ENCODE measurements at regions of chr10 and their contacts with region 1.

Region 1: DNA sequence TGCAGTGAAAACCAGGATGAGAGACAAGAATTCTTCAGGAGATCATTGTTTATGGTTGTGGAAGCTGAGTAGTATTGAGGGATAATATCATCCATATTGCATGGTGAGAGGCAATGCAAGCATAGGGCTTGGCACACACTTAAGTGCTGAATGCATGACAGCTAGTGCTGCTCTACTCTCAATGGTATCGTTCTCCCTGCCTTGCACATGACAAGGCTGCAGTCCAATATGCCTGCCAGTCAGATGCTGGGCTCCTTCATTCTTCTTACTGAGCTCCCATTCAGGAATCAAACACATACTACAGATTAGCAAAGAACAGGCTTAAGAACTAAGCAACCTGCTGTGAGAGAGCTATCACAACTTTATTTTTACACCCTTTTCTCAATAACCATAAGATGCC is 72.2 kb downstream of the SORCS1 start:
- DNase-seq: no peak
- H3K4me3 ChIP-seq: no peak overlapping the region
- H3K27ac ChIP-seq: no peak overlapping the region
- H3K4me1 ChIP-seq: peaks cover 8% of the 10 kb centered on the region
- H3K27me3 ChIP-seq: no peaks in the 10 kb centered on the region
- CTCF ChIP-seq: no peak

Region 2: GRCh38 chr10:106436123-106436740 is 656.1 kb before region 1 on chr10:
- CTCF ChIA-PET with region 1: no interaction called
- POLR2A ChIA-PET with region 1: interaction called, 10 read pairs
- intact Hi-C with region 1: no loop called
- DNase-seq: no peak
- H3K4me3 ChIP-seq: no peak overlapping the region
- H3K27ac ChIP-seq: no peak overlapping the region
- H3K4me1 ChIP-seq: no peaks in the 10 kb centered on the region
- H3K27me3 ChIP-seq: no peaks in the 10 kb centered on the region
- CTCF ChIP-seq: no peak